Pancreas (tissue), 10 donors: ENCODE measurements at regions of chr2 and their contacts with region 1.

Region 1: GRCh38 chr2:235595422-235596010 is 101.7 kb downstream of the AGAP1 start:
- DNase-seq: peak in 4 of 6 donors; percentile 31 to 74 (median 50)
- ATAC-seq: peak; percentile 42 to 80 (median 78)
- H3K4me3 ChIP-seq: no peak overlapping the region
- H3K27ac ChIP-seq: no peak overlapping the region
- H3K4me1 ChIP-seq: no peaks in the 10 kb centered on the region
- H3K27me3 ChIP-seq: no peaks in the 10 kb centered on the region
- CTCF ChIP-seq: peak; percentile 54 to 80 (median 60)

Region 2: DNA sequence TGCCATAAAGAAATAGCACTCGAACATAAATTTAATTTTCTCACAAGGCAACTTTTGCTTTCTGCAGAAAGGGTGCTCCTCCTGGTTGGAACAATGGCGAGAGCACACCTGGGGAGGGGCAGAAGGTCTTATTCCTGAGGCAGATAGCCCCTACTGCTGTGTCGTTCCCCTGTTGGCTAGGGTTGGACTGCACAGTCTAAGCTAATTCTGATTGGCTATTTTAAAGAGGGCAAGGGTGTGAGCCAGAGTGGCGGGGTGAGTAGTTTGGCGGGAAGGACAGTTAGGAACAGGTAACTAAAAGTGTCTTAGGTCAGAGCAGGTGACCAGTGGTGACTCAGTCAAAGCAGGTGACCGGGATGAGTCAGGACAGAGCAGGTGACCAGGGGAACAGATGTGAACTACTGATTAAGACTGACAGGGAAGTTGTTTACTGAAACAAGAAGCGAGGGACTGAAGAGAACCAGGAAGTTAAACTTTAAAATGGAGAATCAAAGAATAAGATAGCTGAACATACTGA is 151.4 kb before region 1 on chr2:
- intact Hi-C with region 1: no loop called
- DNase-seq: no peak
- ATAC-seq: peak in 2 of 4 donors; percentile 20 to 26
- H3K4me3 ChIP-seq: no peak overlapping the region
- H3K27ac ChIP-seq: no peak overlapping the region
- H3K4me1 ChIP-seq: no peaks in the 10 kb centered on the region
- H3K27me3 ChIP-seq: no peaks in the 10 kb centered on the region
- CTCF ChIP-seq: no peak

Region 3: DNA sequence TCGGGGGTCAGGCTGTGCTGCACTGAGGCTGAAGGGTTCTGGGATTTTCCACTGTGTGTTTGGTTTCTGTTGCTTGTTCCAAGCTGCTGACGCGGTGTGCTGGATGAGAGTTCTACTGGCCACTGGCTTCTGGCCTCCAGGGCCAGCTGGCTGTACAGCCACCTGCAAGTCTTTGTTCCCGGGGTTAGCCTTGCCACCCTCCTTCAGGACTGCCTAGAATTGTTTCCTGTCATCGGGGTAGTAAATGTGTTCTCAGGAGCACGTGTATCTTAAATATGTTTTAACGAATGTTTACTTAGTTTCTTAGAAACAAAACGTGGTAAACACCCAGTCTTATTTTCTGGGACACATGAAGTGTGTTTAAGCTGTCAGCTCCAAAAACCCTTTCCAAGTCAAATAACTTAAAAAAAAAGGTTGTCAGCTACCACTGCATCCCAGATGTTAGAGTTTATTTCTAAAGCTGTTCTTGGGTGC is 129.5 kb after region 1 on chr2:
- intact Hi-C with region 1: no loop called
- DNase-seq: peak; percentile 39 to 73 (median 64)
- ATAC-seq: peak; percentile 82 to 90 (median 88)
- H3K4me3 ChIP-seq: no peak overlapping the region
- H3K27ac ChIP-seq: peak overlapping the region; percentile 23 to 64 (median 34)
- H3K4me1 ChIP-seq: peaks cover 5 to 14% (median 8%) of the 10 kb centered on the region in 3 donors
- H3K27me3 ChIP-seq: no peaks in the 10 kb centered on the region
- CTCF ChIP-seq: no peak

Region 4: DNA sequence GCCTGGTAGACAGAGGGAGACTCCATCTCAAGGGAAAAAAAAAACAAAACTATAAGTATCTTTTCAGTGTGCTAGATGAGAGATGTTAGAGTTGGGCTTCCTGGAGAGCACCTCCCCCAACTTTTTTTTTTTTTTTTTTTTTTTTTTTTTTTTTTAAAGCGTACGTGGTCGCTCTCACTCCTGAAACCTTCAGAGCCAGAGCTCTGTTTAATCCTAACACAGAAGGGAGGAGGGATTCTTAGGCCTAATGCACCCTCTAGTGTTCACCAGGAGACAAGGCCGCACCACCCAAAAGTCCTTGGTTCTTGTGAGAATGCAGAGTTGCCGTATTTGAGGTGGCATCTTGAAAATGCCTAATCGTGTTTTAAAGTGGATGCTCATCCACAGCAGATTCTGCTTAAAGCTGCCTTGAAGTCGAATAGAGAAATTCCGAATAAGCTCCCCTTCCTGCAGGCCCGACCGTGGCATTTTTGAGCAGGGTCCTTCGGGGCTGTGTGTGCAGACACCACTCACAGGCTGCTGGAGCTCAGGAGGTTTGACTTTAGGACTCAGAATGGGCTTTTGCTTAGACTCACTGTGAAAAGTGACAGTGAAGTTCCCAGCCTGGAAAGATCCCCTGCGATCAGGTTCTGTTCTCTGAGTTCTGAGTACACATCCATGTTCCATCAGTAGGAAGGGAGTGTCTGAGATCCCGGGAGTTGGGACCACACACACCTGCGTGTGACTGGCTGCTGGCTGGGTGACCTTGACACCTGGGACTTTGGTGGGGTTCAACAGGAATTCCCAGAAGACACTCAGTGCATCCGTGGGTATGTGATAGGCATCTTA is 151.0 kb after region 1 on chr2:
- intact Hi-C with region 1: loop called in 2 of 3 experiments (anchors 5 kb)
- DNase-seq: peak in 4 of 6 donors; percentile 26 to 77 (median 52)
- ATAC-seq: peak; percentile 94 to 98 (median 96)
- H3K4me3 ChIP-seq: no peak overlapping the region
- H3K27ac ChIP-seq: no peak overlapping the region
- H3K4me1 ChIP-seq: no peaks in the 10 kb centered on the region
- H3K27me3 ChIP-seq: no peaks in the 10 kb centered on the region
- CTCF ChIP-seq: peak; percentile 53 to 77 (median 66)